Panc1 (cell line): ENCODE measurements at regions of chr16 and their contacts with region 1.

Region 1: DNA sequence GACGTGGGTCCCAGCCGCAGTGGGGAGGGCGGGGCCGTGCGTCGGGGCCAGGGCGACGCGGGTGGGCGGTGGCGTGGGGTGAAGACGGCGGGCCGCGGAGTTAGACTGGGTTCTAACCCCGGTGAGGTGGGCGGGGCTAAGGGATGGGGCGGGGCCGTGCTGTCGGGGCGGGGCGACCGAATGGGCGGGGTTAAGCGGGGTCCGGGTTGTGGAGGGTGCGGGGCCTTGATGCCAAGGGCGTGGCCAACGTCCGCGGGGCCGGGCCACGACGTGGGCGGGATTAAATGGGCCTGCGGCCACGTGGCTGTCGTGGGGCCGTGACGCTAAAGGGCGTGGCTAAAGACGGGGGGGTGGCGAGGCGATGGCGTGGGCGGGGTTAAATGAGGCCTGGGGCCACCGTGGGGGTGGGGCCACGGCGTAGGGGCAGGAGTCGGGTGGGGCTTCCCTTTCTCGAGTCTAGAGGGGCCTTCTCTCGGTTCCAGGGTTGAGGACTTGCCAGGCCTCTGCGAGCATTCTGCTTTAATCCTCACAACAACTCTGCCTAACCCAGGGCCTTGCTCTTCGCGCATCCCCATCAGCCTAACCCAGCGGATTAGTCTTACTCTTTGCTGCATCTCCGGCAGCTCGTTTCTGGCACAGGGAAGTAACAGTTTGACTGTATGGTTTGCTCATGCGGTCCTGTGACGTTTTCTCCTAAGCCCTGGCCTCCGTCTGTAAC is 739 bp downstream of the TCF25 start:
- DNase-seq: peak; percentile 46
- ATAC-seq: peak; percentile 89
- H3K4me3 ChIP-seq: peak overlapping the region; percentile 66 to 70
- H3K27ac ChIP-seq: peak overlapping the region; percentile 82
- H3K4me1 ChIP-seq: peaks cover 3% of the 10 kb centered on the region; the same call in 1 of the 2 replicates
- H3K27me3 ChIP-seq: no peaks in the 10 kb centered on the region
- CTCF ChIP-seq: no peak

Region 2: GRCh38 chr16:88864521-88864920 is 1009.6 kb before region 1 on chr16:
- CTCF ChIA-PET with region 1: no interaction called
- POLR2A ChIA-PET with region 1: interaction called, 10 read pairs
- in situ Hi-C with region 1: no loop called
- intact Hi-C with region 1: no loop called
- DNase-seq: no peak
- ATAC-seq: no peak
- H3K4me3 ChIP-seq: no peak overlapping the region
- H3K27ac ChIP-seq: no peak overlapping the region
- H3K4me1 ChIP-seq: no peaks in the 10 kb centered on the region
- H3K27me3 ChIP-seq: no peaks in the 10 kb centered on the region
- CTCF ChIP-seq: no peak

Region 3: GRCh38 chr16:89845417-89845816 is 28.7 kb before region 1 on chr16:
- CTCF ChIA-PET with region 1: no interaction called
- POLR2A ChIA-PET with region 1: interaction called, 10 read pairs
- in situ Hi-C with region 1: no loop called
- intact Hi-C with region 1: no loop called
- DNase-seq: no peak
- ATAC-seq: no peak
- H3K4me3 ChIP-seq: no peak overlapping the region
- H3K27ac ChIP-seq: no peak overlapping the region
- H3K4me1 ChIP-seq: peaks cover 9% of the 10 kb centered on the region; the same call in 1 of the 2 replicates
- H3K27me3 ChIP-seq: no peaks in the 10 kb centered on the region
- CTCF ChIP-seq: no peak

Region 4: DNA sequence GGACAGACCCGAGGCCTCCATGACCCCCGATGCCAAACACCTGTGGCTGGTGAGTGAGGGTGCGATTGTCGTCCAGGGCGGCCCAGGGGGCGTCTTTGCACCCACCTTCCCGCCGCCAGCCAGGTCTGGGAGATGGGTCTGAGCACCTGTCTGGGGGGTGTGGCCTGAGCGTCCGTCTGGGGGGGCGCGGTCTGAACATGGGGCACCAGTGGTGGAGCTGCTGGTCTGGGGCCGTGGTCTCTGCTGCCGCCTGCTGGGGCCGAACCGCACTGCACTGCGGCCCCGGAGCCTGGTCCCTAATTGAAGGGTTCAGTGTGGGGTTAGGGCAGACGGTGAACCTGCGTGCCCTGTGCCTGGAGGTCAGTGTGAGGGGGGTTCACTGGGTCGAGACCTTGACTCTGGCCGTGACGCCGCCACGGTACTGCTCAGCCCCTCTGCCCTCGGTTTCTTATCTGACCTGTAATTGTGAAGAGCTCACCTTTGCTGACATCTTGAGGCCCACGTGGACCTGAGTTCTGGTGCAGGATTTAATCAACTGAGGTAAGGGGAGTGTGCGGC is 13.3 kb before region 1 on chr16:
- CTCF ChIA-PET with region 1: interaction called, 11 read pairs
- POLR2A ChIA-PET with region 1: interaction called, 6 read pairs
- in situ Hi-C with region 1: no loop called
- intact Hi-C with region 1: no loop called
- DNase-seq: peak; percentile 32
- ATAC-seq: peak; percentile 94
- H3K4me3 ChIP-seq: no peak overlapping the region
- H3K27ac ChIP-seq: no peak overlapping the region
- H3K4me1 ChIP-seq: no peaks in the 10 kb centered on the region
- H3K27me3 ChIP-seq: no peaks in the 10 kb centered on the region
- CTCF ChIP-seq: peak; percentile 98

Region 5: GRCh38 chr16:89909777-89910716 is 35.9 kb after region 1 on chr16:
- CTCF ChIA-PET with region 1: no interaction called
- POLR2A ChIA-PET with region 1: no interaction called
- in situ Hi-C with region 1: no loop called
- intact Hi-C with region 1: no loop called
- DNase-seq: no peak
- ATAC-seq: peak; percentile 52; the same call in 1 of the 2 replicates
- H3K4me3 ChIP-seq: no peak overlapping the region
- H3K27ac ChIP-seq: no peak overlapping the region
- H3K4me1 ChIP-seq: no peaks in the 10 kb centered on the region
- H3K27me3 ChIP-seq: no peaks in the 10 kb centered on the region
- CTCF ChIP-seq: peak; percentile 88